PC-3 (cell line): ENCODE measurements at regions of chr5 and their contacts with region 1.

Region 1: DNA sequence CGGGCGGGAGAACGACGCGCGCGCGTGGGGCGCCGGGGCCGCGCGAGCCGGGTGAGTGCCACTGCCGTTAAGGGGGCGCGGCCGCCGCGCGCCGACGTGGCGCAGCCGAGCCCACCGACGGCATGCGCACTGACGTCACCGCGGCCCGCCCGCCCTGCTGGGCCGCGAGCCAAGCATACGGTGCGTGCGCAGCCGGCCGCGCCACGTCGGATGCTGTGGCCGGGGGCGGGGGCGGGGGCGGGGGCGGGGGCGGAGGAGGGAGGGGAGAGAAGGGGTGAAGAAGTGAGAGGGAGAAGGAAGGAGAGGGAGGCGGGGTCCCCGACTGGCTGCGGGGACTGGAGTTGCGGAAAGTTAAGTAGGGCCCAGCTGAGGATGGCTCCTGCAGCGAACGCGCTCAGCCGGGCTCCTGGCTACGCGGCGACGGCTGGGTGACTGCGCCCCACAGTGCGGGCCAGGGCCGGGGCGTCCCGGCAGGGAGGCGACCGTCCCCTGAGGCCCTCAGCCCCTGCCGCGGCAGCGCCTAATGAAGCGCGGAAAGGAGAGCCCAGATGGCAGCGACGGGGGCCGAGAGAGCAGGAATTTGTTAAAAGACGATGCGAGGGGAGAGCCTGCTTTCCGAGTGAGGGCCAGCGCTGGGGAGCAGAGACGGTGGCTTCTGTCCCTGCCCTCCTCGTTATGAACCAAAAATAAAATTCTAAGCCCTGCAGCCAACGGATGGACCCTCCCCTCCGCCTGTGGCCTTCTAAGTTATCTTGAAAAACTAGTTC is at the start of gene DAP:
- DNase-seq: peak; percentile 99
- ATAC-seq: peak; percentile 78
- H3K4me3 ChIP-seq: peak within 1 kb of the TSS; percentile 83
- H3K27ac ChIP-seq: peak within 1 kb of the TSS; percentile 72
- H3K4me1 ChIP-seq: peaks cover 44% of the 10 kb centered on the region
- H3K27me3 ChIP-seq: no peaks in the 10 kb centered on the region
- CTCF ChIP-seq: no peak
- total RNA-seq, gene DAP: 106 and 152 TPM in 2 replicates

Region 2: GRCh38 chr5:10701567-10702039 is 59.7 kb before region 1 on chr5:
- CTCF ChIA-PET with region 1: no interaction called
- POLR2A ChIA-PET with region 1: no interaction called
- intact Hi-C with region 1: loop called (anchors 1 kb)
- DNase-seq: peak; percentile 81
- ATAC-seq: no peak
- H3K4me3 ChIP-seq: peak overlapping the region; percentile 24; the same call in 1 of the 2 replicates
- H3K27ac ChIP-seq: peak overlapping the region; percentile 93
- H3K4me1 ChIP-seq: peaks cover 60% of the 10 kb centered on the region
- H3K27me3 ChIP-seq: no peaks in the 10 kb centered on the region
- CTCF ChIP-seq: peak; percentile 74

Region 3: GRCh38 chr5:10724799-10725507 is 36.4 kb before region 1 on chr5:
- CTCF ChIA-PET with region 1: no interaction called
- POLR2A ChIA-PET with region 1: interaction called, 6 read pairs
- intact Hi-C with region 1: loop called (anchors 2 kb)
- DNase-seq: peak; percentile 100
- ATAC-seq: peak; percentile 84
- H3K4me3 ChIP-seq: peak overlapping the region; percentile 24
- H3K27ac ChIP-seq: peak overlapping the region; percentile 95
- H3K4me1 ChIP-seq: peaks cover 66% of the 10 kb centered on the region
- H3K27me3 ChIP-seq: no peaks in the 10 kb centered on the region
- CTCF ChIP-seq: peak; percentile 88

Region 4: GRCh38 chr5:10735569-10736276 is 25.6 kb before region 1 on chr5:
- CTCF ChIA-PET with region 1: no interaction called
- POLR2A ChIA-PET with region 1: interaction called, 3 read pairs
- intact Hi-C with region 1: loop called (anchors 2 kb)
- DNase-seq: no peak
- ATAC-seq: no peak
- H3K4me3 ChIP-seq: no peak overlapping the region
- H3K27ac ChIP-seq: no peak overlapping the region
- H3K4me1 ChIP-seq: peaks cover 42% of the 10 kb centered on the region
- H3K27me3 ChIP-seq: no peaks in the 10 kb centered on the region
- CTCF ChIP-seq: no peak

Region 5: GRCh38 chr5:10801931-10802659 is 40.7 kb after region 1 on chr5:
- CTCF ChIA-PET with region 1: no interaction called
- POLR2A ChIA-PET with region 1: no interaction called
- intact Hi-C with region 1: no loop called
- DNase-seq: peak; percentile 16
- ATAC-seq: peak; percentile 40
- H3K4me3 ChIP-seq: no peak overlapping the region
- H3K27ac ChIP-seq: no peak overlapping the region
- H3K4me1 ChIP-seq: no peaks in the 10 kb centered on the region
- H3K27me3 ChIP-seq: no peaks in the 10 kb centered on the region
- CTCF ChIP-seq: 0 out of 2 replicates have a peak, but pooled peaks have one; percentile 14

Region 6: DNA sequence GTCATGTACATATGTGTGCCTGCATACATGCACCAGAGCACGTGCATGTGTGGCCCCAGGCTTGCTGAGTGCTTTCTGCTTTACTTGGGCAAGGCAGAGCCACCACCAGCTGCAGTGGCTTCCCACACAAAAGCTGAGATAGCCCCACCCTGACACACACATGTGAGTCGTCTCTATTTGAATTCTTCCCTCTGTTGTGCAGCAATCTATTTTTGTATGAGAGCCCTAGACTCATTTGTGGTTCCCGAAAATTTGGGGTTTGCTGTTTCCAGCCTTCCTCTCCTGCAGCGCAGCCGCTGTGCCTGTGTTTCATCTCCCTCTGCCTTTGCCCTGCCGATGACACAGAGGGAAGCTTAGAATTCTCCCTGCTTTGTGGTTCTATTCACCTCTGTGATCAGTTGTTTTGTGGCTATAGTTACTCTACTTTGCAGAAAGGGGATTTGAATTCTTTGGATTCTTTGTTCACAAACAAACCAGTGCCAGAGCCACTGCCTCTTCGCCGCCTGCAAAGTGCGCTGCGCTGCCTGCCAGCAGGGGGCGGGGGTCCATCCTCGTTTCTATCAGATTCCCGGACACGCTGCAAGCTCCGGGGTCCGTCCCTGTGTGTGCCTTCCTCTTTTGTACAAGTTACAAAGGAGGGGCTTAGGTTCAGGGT is 95.5 kb after region 1 on chr5:
- CTCF ChIA-PET with region 1: no interaction called
- POLR2A ChIA-PET with region 1: interaction called, 4 read pairs
- intact Hi-C with region 1: loop called (anchors 10 kb)
- DNase-seq: peak; percentile 62
- ATAC-seq: peak; percentile 56
- H3K4me3 ChIP-seq: peak overlapping the region; percentile 40; the same call in 1 of the 2 replicates
- H3K27ac ChIP-seq: no peak overlapping the region
- H3K4me1 ChIP-seq: peaks cover 33% of the 10 kb centered on the region
- H3K27me3 ChIP-seq: no peaks in the 10 kb centered on the region
- CTCF ChIP-seq: peak; percentile 97

Region 7: DNA sequence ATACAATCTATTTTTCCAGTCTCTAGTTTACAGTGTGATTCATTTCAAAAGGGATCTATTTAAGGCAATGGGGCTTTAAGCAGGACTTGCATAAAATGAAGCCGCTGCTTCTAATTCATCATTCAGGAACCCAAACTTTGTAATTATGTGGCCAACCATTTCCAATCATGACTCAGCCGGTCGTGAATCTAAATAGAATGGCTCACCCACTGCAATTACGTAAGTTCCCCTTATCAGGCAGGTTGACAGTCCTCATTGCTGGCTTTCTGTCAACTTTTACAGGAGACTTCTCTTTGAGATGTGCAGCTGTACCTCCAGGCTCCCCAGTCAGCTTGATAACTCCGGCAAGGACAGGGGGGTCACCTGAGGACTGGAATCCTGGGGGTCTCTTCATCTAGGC is 152.5 kb after region 1 on chr5:
- CTCF ChIA-PET with region 1: no interaction called
- POLR2A ChIA-PET with region 1: no interaction called
- intact Hi-C with region 1: loop called (anchors 10 kb)
- DNase-seq: peak; percentile 100
- ATAC-seq: peak; percentile 85
- H3K4me3 ChIP-seq: peak overlapping the region; percentile 37
- H3K27ac ChIP-seq: peak overlapping the region; percentile 80
- H3K4me1 ChIP-seq: peaks cover 34% of the 10 kb centered on the region
- H3K27me3 ChIP-seq: no peaks in the 10 kb centered on the region
- CTCF ChIP-seq: no peak

Region 8: DNA sequence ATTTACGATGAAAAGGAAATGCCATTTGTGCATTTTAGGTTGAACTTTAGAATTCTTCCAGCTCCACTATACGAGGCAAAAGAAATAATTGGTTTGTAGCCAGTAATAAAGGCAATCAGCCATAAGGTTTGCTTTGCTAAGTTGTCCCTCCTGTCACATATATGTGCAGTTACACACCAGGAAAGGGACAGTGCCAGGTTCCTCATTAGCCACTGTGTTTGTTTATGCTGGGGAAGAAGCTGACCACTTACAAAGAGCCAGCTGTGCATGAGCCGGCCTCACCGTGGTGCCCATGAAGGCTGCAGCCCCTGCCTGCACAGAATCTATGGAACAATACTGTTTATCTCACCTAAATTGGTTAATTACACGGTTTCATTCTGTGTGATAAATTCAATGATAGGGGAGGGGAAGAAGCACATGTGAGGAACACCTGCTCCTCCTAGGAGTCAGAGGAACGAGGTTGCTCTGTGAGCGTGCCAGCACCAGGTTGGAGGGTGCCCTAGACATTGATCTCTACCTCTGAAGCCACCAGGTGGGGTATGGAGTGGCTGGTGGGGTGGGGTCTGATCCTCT is 173.5 kb after region 1 on chr5:
- CTCF ChIA-PET with region 1: no interaction called
- POLR2A ChIA-PET with region 1: no interaction called
- intact Hi-C with region 1: no loop called
- DNase-seq: no peak
- ATAC-seq: no peak
- H3K4me3 ChIP-seq: no peak overlapping the region
- H3K27ac ChIP-seq: no peak overlapping the region
- H3K4me1 ChIP-seq: no peaks in the 10 kb centered on the region
- H3K27me3 ChIP-seq: no peaks in the 10 kb centered on the region
- CTCF ChIP-seq: no peak